ENCODE measurements at regions of chr19 and their contacts with region 1.

Region 1: DNA sequence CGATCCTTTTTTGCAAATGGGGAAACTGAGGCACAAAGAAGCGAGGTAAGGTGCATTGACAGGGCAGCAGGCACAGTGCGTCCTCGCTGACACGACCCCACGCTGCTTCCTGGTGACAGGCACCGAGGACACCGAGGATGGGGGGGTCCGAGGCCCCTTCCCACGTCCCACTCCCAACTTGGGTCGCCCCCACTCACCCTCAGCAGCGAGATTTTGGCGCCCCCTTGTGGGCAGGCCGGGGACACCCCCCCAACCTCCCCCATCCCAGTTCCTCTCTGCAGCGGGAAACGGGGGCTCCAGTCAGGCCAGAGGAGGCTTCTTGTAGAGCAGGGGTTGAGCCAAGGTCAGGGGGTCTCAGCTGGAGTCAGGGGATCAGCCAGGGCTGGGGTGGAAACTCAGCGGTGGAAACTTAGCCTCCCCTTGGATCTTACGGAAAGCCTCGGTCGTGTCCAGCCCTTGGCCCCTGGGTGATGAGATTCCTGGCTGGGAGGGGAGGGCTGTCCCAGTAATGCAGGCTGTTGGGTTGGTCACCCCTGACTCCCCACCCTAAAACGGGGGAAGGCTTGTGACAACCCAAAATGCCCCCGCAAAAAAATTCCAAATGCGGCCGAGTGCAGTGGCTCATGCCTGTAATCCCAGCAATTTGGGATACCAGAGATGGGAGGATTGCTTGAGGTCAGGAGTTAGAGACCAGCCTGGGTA is 8.2 kb downstream of the SMIM24 start:
- DNase-seq: peak in 1 of 2 donors; percentile 39
- ATAC-seq: peak; percentile 24 to 28
- H3K4me3 ChIP-seq: no peak overlapping the region
- H3K27ac ChIP-seq: no peak overlapping the region
- H3K4me1 ChIP-seq: no peaks in the 10 kb centered on the region
- H3K27me3 ChIP-seq: peaks cover 0 to 10% (median 0%) of the 10 kb centered on the region in 3 donors
- CTCF ChIP-seq: peak; percentile 91 to 95 (median 94)
- POLR2A ChIP-seq: no peak

Region 2: DNA sequence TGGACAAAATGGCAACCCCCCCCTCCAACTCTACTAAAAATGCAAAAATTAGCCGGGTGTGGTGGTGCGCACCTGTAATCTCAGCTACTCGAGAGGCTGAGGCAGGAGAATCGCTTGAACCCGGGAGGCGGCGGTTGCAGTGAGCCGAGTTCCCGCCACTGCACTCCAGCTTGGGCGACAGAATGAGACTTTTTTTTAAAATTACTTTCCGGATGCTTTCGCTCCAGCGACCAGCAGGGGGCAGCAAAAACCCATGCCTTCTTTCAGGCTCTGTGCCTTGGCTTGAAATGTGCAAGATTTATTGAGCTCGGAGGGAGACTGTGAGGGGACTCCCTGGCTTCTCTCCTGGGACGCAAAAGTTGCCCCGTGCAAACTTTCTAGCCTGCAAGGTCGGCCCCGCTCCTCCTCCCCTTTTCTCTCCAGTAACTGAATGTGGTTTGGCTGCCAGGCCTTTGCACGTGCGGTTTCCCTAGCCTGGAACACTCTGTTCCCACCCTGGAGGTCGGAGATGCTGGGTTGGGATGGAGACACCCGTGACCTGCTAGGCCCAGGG is 167.2 kb before region 1 on chr19:
- in situ Hi-C with region 1: no loop called
- intact Hi-C with region 1: loop called (anchors 1 kb)
- DNase-seq: peak; percentile 48 to 51
- ATAC-seq: peak; percentile 70 to 75
- H3K4me3 ChIP-seq: no peak overlapping the region
- H3K27ac ChIP-seq: no peak overlapping the region
- H3K4me1 ChIP-seq: peaks cover 3% of the 10 kb centered on the region in 2 donors
- H3K27me3 ChIP-seq: peaks cover 28 to 55% (median 46%) of the 10 kb centered on the region in 3 donors
- CTCF ChIP-seq: peak; percentile 86 to 93 (median 88)
- POLR2A ChIP-seq: no peak

Region 3: GRCh38 chr19:3324321-3324856 is 147.7 kb before region 1 on chr19:
- in situ Hi-C with region 1: loop called (anchors 5 to 10 kb)
- intact Hi-C with region 1: loop called (anchors 1 kb)
- DNase-seq: peak in 1 of 2 donors; percentile 54
- ATAC-seq: no peak
- H3K4me3 ChIP-seq: no peak overlapping the region
- H3K27ac ChIP-seq: no peak overlapping the region
- H3K4me1 ChIP-seq: no peaks in the 10 kb centered on the region
- H3K27me3 ChIP-seq: peaks cover 12 to 21% (median 17%) of the 10 kb centered on the region in 3 donors
- CTCF ChIP-seq: peak; percentile 50 to 80 (median 75)
- POLR2A ChIP-seq: no peak

Measured in gastrocnemius medialis (tissue), 4 donors.